SK-N-SH (cell line): ENCODE measurements at regions of chr2 and their contacts with region 1.

Region 1: GRCh38 chr2:128282976-128283810 is 35.5 kb downstream of the HS6ST1 start:
- DNase-seq: peak; percentile 83
- H3K4me3 ChIP-seq: no peak overlapping the region
- H3K27ac ChIP-seq: peak overlapping the region in 1 of 2 experiments; percentile 82; a peak in 2 of 4 replicates
- H3K4me1 ChIP-seq: peaks cover 0 to 57% of the 10 kb centered on the region in 2 experiments; a peak in 1 of 4 replicates
- H3K27me3 ChIP-seq: no peaks in the 10 kb centered on the region
- CTCF ChIP-seq: peak; percentile 23
- EP300 ChIP-seq: no peak
- RAD21 ChIP-seq: peak; percentile 71

Region 2: GRCh38 chr2:128054104-128054503 is 229.1 kb before region 1 on chr2:
- CTCF ChIA-PET with region 1: no interaction called
- POLR2A ChIA-PET with region 1: no interaction called
- DNase-seq: no peak
- H3K4me3 ChIP-seq: no peak overlapping the region
- H3K27ac ChIP-seq: no peak overlapping the region
- H3K4me1 ChIP-seq: no peaks in the 10 kb centered on the region
- H3K27me3 ChIP-seq: peaks cover 5% of the 10 kb centered on the region; the same call in 1 of the 2 replicates
- CTCF ChIP-seq: no peak
- EP300 ChIP-seq: no peak
- RAD21 ChIP-seq: no peak

Region 3: GRCh38 chr2:128301501-128301966 is 18.3 kb after region 1 on chr2:
- CTCF ChIA-PET with region 1: interaction called, 27 read pairs
- POLR2A ChIA-PET with region 1: no interaction called
- DNase-seq: no peak
- H3K4me3 ChIP-seq: no peak overlapping the region
- H3K27ac ChIP-seq: peak overlapping the region in 1 of 2 experiments; percentile 35; a peak in 2 of 4 replicates
- H3K4me1 ChIP-seq: peaks cover 22 to 77% of the 10 kb centered on the region in 2 experiments
- H3K27me3 ChIP-seq: no peaks in the 10 kb centered on the region
- CTCF ChIP-seq: no peak
- EP300 ChIP-seq: no peak
- RAD21 ChIP-seq: no peak

Region 4: GRCh38 chr2:128321784-128322714 is 38.9 kb after region 1 on chr2:
- CTCF ChIA-PET with region 1: interaction called, 23 read pairs
- POLR2A ChIA-PET with region 1: no interaction called
- DNase-seq: peak; percentile 96
- H3K4me3 ChIP-seq: peak overlapping the region; percentile 60 to 68
- H3K27ac ChIP-seq: peak overlapping the region in 1 of 2 experiments; percentile 79; a peak in 1 of 4 replicates
- H3K4me1 ChIP-seq: peaks cover 3 to 38% of the 10 kb centered on the region in 2 experiments; a peak in 2 of 4 replicates
- H3K27me3 ChIP-seq: no peaks in the 10 kb centered on the region
- CTCF ChIP-seq: peak; percentile 90
- EP300 ChIP-seq: peak in 1 of 2 experiments; percentile 54; a peak in 2 of 4 replicates
- RAD21 ChIP-seq: peak; percentile 88

Region 5: DNA sequence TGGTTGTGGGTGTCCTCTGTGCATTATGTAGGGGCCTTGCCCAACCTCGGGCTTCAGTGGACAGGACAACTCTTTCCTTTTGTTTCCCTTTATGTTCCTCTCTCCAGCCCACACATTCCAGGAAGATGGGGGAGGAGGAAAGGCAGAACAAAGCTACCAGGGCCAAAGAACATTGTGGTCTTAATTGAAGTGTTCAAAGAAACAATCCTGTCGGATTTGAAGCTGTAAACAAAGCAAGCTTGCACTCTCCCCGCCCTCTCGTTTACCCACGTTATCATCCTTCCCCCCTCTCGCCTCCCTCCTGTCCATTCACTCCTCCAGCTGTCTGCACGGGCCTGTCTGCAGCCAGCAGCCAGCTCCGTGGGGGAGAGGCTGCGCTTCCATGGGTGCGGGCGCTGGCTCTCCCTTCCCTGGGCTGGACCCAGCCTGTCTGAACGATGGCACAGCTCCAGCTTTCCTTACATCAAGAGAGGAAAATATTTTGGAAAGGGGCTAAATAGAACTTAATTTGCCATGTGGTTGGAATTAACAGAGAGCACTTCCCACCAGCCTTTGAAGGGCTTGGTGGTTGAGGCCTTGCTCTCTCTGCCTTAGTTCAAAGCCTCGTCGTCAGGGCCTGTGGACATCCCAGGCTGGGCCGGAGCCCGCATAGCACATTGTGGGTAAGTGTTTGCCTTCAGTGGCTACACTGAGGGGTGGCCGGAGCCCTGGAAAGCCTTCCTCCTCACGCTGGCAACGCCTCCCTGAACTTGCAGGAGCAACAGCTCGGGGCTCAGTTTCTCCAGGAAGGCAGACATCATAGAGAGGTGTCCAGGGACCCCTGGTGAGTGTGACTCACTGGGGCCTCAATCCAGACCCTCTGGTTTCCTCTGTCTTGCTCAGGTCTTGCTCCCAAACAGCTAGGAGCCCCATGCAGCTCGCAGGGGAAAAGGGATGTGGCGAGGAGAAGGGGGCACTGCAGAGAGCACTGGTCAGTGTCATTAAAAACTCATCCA is 96.1 kb after region 1 on chr2:
- CTCF ChIA-PET with region 1: no interaction called
- POLR2A ChIA-PET with region 1: no interaction called
- DNase-seq: peak; percentile 70
- H3K4me3 ChIP-seq: no peak overlapping the region
- H3K27ac ChIP-seq: peak overlapping the region in 1 of 2 experiments; percentile 34; a peak in 2 of 4 replicates
- H3K4me1 ChIP-seq: peaks cover 0 to 55% of the 10 kb centered on the region in 2 experiments; a peak in 1 of 4 replicates
- H3K27me3 ChIP-seq: no peaks in the 10 kb centered on the region
- CTCF ChIP-seq: no peak
- EP300 ChIP-seq: no peak
- RAD21 ChIP-seq: no peak